ENCODE measurements at regions of chr17 and their contacts with region 1.

Region 1: GRCh38 chr17:57898487-57899311 is 48.9 kb upstream of the MRPS23 start:
- DNase-seq: no peak
- ATAC-seq: peak; percentile 39; the same call in 1 of the 2 replicates
- H3K4me3 ChIP-seq: no peak overlapping the region
- H3K27ac ChIP-seq: peak overlapping the region; percentile 73
- H3K4me1 ChIP-seq: peaks cover 68% of the 10 kb centered on the region
- H3K27me3 ChIP-seq: no peaks in the 10 kb centered on the region
- CTCF ChIP-seq: no peak

Region 2: DNA sequence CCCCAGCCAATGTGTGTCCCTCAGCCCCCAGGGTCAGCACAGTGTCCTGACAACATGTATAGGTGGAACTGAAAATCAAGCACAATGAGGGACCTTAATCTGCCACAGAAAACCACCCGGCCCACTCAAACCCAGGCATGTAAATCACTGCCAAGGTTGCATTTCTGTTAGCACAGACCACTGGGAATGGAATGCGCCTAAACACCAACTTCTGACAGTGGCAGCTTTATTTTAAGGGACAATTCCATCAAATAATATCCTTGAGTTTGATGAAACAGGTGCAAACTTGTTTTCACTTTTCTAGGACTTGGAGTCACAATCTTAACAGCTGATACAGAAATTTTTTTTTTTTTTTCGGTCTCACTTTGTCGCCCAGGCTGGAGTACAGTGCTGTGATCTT is 11.5 kb before region 1 on chr17:
- CTCF ChIA-PET with region 1: interaction called, 9 read pairs
- POLR2A ChIA-PET with region 1: interaction called, 15 read pairs
- in situ Hi-C with region 1: no loop called
- intact Hi-C with region 1: no loop called
- DNase-seq: no peak
- ATAC-seq: no peak
- H3K4me3 ChIP-seq: no peak overlapping the region
- H3K27ac ChIP-seq: peak overlapping the region; percentile 14; the same call in 1 of the 2 replicates
- H3K4me1 ChIP-seq: peaks cover 39% of the 10 kb centered on the region
- H3K27me3 ChIP-seq: no peaks in the 10 kb centered on the region
- CTCF ChIP-seq: no peak

Region 3: DNA sequence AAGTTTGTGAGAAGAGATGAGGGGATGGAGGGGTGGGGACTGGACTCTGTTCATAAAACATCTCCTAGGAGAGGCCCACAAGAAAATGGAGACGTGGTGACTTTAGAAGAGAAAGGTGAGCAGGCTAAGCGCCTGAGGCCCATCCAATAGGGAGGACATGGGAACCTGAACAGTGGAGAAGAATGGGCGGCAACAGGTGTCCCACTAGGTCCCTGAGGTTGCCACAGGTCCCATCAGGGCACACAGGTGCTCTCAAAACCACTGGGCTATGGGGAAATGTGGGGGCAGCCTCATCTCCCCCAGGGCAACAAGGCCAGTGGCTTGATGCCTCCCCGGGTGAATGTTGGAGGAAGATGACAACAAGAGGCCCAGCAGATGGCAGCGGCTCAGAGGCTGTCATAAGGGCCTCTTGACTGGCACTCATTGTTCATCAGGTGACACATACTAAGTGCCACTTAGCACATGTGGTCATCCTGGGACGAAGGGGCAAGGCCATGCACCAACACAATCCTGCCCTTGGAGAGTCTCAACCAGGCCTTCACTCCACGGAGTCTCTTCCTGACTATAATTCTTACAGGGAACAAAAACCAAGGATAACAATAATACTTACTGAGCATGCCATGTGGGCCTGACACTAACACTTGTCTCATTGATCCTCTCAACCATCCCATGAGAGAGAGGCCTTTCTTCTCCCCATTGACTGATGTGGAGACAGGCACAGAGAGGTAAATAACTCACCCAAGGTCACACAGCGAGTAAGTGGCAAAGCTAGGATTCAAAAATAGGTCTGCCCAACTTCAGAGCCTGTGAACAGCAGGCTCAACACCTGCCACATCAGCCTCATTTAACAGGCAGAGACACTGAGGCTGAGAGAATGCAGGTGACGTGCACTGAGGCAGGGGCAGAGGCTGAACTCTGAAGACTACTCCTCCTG is 18.5 kb after region 1 on chr17:
- CTCF ChIA-PET with region 1: no interaction called
- POLR2A ChIA-PET with region 1: no interaction called
- in situ Hi-C with region 1: no loop called
- intact Hi-C with region 1: no loop called
- DNase-seq: no peak
- ATAC-seq: peak; percentile 44
- H3K4me3 ChIP-seq: no peak overlapping the region
- H3K27ac ChIP-seq: peak overlapping the region; percentile 76
- H3K4me1 ChIP-seq: peaks cover 77% of the 10 kb centered on the region
- H3K27me3 ChIP-seq: no peaks in the 10 kb centered on the region
- CTCF ChIP-seq: no peak

Region 4: DNA sequence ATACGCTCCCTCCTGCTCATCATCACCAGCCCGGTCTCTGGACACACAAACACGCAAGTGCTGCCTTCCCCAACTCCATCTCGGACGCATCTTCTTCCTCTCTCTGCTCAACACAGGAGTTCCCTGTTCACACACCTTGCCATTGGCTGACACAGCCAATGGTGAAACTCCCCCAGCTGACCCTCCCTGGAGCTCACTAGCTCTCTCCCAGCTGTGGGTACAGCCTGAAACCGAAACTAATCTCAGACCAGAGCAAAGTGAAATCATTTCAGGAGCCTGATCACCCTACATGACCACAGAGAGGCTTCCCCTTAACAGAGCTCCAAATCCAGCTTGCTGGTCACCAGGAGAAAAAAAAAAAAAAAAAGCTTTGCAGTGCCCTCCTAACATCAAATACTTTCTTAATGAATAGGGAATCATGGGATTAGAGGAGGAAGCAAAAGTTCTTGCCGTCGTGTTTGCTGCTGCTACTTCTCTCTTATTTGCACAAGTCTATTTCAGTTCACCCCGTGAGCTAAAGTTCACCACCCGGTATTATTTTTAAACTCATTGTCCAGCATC is 48.2 kb after region 1 on chr17:
- CTCF ChIA-PET with region 1: no interaction called
- POLR2A ChIA-PET with region 1: no interaction called
- in situ Hi-C with region 1: no loop called
- intact Hi-C with region 1: no loop called
- DNase-seq: no peak
- ATAC-seq: peak; percentile 62
- H3K4me3 ChIP-seq: peak overlapping the region; percentile 26 to 70
- H3K27ac ChIP-seq: peak overlapping the region; percentile 98
- H3K4me1 ChIP-seq: peaks cover 88% of the 10 kb centered on the region
- H3K27me3 ChIP-seq: no peaks in the 10 kb centered on the region
- CTCF ChIP-seq: no peak

Region 5: DNA sequence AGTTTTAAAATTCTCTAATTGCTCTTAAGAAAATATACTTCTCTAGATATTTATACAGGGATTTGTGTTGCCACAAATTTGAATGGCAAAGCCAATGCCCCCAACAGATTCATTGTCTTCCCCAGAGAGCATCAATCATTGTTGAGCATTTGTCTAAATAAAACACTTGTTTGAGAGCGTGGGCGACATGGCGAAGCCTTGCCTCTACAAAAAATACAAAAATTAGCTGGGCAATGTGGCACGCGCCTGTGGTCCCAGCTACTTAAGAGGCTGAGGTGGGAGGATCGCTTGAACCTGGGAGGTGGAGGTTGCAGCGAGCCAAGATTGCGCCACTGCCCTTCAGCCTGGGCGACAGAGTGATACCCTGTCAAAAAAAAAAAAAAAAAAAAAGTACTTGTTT is 121.7 kb after region 1 on chr17:
- CTCF ChIA-PET with region 1: no interaction called
- POLR2A ChIA-PET with region 1: no interaction called
- in situ Hi-C with region 1: no loop called
- intact Hi-C with region 1: no loop called
- DNase-seq: no peak
- ATAC-seq: no peak
- H3K4me3 ChIP-seq: no peak overlapping the region
- H3K27ac ChIP-seq: no peak overlapping the region
- H3K4me1 ChIP-seq: no peaks in the 10 kb centered on the region
- H3K27me3 ChIP-seq: no peaks in the 10 kb centered on the region
- CTCF ChIP-seq: no peak

Region 6: GRCh38 chr17:58755577-58756245 is 857.0 kb after region 1 on chr17 and contains the start of gene PPM1E:
- CTCF ChIA-PET with region 1: no interaction called
- POLR2A ChIA-PET with region 1: no interaction called
- in situ Hi-C with region 1: no loop called
- intact Hi-C with region 1: no loop called
- DNase-seq: no peak
- ATAC-seq: peak; percentile 96
- H3K4me3 ChIP-seq: peak within 1 kb of the TSS; percentile 57 to 70
- H3K27ac ChIP-seq: no peak within 1 kb of the TSS; the same call in 1 of the 2 replicates
- H3K4me1 ChIP-seq: no peaks in the 10 kb centered on the region
- H3K27me3 ChIP-seq: peaks cover 9% of the 10 kb centered on the region
- CTCF ChIP-seq: no peak
- total RNA-seq, gene PPM1E: 2.9 TPM

Measured in Panc1 (cell line).